T-cell (primary cell): ENCODE measurements at regions of chr6 and their contacts with region 1.

Region 1: DNA sequence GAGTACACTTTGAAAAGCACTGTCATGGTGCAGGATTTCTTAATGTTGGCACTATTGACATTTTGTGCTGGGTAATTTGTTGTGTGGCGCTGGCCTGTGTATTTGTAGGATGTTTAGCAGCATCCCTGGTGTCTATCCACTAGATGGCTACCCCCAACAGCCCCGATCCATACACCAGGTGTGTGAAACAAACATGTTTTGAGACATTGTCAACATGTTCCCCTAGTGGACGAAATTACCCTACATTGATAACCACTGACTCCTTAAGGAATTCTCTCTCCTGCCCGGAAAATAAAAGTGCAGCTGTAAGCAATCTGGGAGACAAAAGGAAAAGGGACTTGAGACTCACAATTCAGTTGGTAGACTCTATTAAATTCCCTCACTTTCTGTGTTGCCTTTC is 52.6 kb upstream of the TMEM200A start:
- DNase-seq: no peak
- ATAC-seq: no peak
- H3K4me3 ChIP-seq: no peak overlapping the region
- H3K4me3 Mint-ChIP-seq: no peak overlapping the region
- H3K27ac ChIP-seq: no peak overlapping the region
- H3K27ac Mint-ChIP-seq: no peak overlapping the region
- H3K4me1 ChIP-seq: no peaks in the 10 kb centered on the region
- H3K4me1 Mint-ChIP-seq: no peaks in the 10 kb centered on the region
- H3K27me3 ChIP-seq: no peaks in the 10 kb centered on the region
- H3K27me3 Mint-ChIP-seq: no peaks in the 10 kb centered on the region

Region 2: DNA sequence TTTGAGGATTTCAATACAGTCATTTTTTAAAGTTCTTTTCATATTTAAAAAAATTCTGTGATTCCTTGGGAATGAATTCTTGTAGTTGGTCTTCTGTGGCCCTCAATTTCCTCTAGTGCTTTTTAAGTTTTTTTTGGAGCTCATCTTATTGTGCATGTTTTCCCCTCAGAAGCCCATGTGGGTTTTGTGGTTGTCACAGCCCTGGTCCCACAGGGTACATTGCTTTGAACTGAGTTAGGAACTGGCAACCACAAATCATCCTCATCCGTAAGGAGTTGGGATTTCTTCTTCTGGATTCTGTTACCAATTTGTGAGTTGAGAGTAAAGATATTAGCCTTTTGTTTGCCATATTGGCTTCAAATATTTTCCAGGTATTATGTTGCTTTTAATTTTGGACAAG is 911.9 kb after region 1 on chr6:
- CTCF ChIA-PET with region 1: no interaction called
- POLR2A ChIA-PET with region 1: interaction called in 1 of 2 experiments, 16 read pairs
- DNase-seq: no peak
- ATAC-seq: no peak
- H3K4me3 ChIP-seq: no peak overlapping the region
- H3K4me3 Mint-ChIP-seq: peak overlapping the region in 1 of 3 donors; percentile 23
- H3K27ac ChIP-seq: no peak overlapping the region
- H3K27ac Mint-ChIP-seq: peak overlapping the region in 1 of 2 donors; percentile 52
- H3K4me1 ChIP-seq: peaks cover 0 to 9% of the 10 kb centered on the region in 2 experiments
- H3K4me1 Mint-ChIP-seq: peaks cover 33 to 37% (median 36%) of the 10 kb centered on the region in 3 donors
- H3K27me3 ChIP-seq: no peaks in the 10 kb centered on the region
- H3K27me3 Mint-ChIP-seq: no peaks in the 10 kb centered on the region